PC-9 (cell line): ENCODE measurements at regions of chr9 and their contacts with region 1.

Region 1: GRCh38 chr9:71604197-71605063 is 163.9 kb downstream of the CEMIP2 start:
- DNase-seq: peak in 1 of 2 experiments; percentile 72
- H3K4me3 ChIP-seq: no peak overlapping the region
- H3K27ac ChIP-seq: no peak overlapping the region
- H3K4me1 ChIP-seq: no peaks in the 10 kb centered on the region
- H3K27me3 ChIP-seq: no peaks in the 10 kb centered on the region
- CTCF ChIP-seq: peak; percentile 87

Region 2: DNA sequence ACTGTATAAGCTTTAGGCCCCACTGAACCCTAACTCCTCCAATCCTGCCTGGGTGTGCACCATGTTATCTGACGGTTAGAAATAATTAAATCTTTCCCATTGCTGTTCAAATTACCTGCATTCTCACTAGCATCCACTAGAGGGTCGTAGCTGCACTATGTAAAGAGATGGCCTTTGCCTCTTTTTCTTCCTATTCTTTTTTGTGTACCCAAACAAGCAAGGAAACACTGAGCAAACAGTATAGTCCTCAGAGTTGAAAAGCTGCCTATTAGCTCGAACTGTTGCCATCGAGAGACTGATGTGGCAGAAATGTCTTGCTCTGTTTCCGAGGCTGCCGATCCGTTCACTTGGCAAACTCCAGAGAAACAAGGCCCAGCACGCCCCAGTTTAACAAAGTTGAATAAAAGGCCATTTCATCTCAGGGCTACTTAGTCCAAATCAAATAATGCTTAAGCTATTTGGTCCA is 319.2 kb before region 1 on chr9:
- CTCF ChIA-PET with region 1: no interaction called
- POLR2A ChIA-PET with region 1: no interaction called
- intact Hi-C with region 1: loop called (anchors 10 kb)
- DNase-seq: peak; percentile 49 to 55
- H3K4me3 ChIP-seq: no peak overlapping the region
- H3K27ac ChIP-seq: no peak overlapping the region
- H3K4me1 ChIP-seq: no peaks in the 10 kb centered on the region
- H3K27me3 ChIP-seq: no peaks in the 10 kb centered on the region
- CTCF ChIP-seq: peak; percentile 92

Region 3: GRCh38 chr9:71562140-71562539 is 42.3 kb before region 1 on chr9:
- CTCF ChIA-PET with region 1: no interaction called
- POLR2A ChIA-PET with region 1: no interaction called
- intact Hi-C with region 1: no loop called
- DNase-seq: no peak
- H3K4me3 ChIP-seq: no peak overlapping the region
- H3K27ac ChIP-seq: no peak overlapping the region
- H3K4me1 ChIP-seq: no peaks in the 10 kb centered on the region
- H3K27me3 ChIP-seq: no peaks in the 10 kb centered on the region
- CTCF ChIP-seq: no peak

Region 4: GRCh38 chr9:71683598-71684235 is 79.3 kb after region 1 on chr9:
- CTCF ChIA-PET with region 1: no interaction called
- POLR2A ChIA-PET with region 1: no interaction called
- intact Hi-C with region 1: loop called (anchors 1 kb)
- DNase-seq: no peak
- H3K4me3 ChIP-seq: no peak overlapping the region
- H3K27ac ChIP-seq: no peak overlapping the region
- H3K4me1 ChIP-seq: peaks cover 88% of the 10 kb centered on the region
- H3K27me3 ChIP-seq: no peaks in the 10 kb centered on the region
- CTCF ChIP-seq: no peak

Region 5: GRCh38 chr9:71716138-71716909 is 111.9 kb after region 1 on chr9:
- CTCF ChIA-PET with region 1: interaction called, 6 read pairs
- POLR2A ChIA-PET with region 1: no interaction called
- intact Hi-C with region 1: loop called (anchors 2 kb)
- DNase-seq: no peak
- H3K4me3 ChIP-seq: no peak overlapping the region
- H3K27ac ChIP-seq: no peak overlapping the region
- H3K4me1 ChIP-seq: no peaks in the 10 kb centered on the region; the same call in 1 of the 2 replicates
- H3K27me3 ChIP-seq: no peaks in the 10 kb centered on the region
- CTCF ChIP-seq: peak; percentile 77

Region 6: GRCh38 chr9:71819115-71819739 is 214.8 kb after region 1 on chr9:
- CTCF ChIA-PET with region 1: no interaction called
- POLR2A ChIA-PET with region 1: interaction called, 4 read pairs
- intact Hi-C with region 1: loop called (anchors 1 kb)
- DNase-seq: peak in 1 of 2 experiments; percentile 28
- H3K4me3 ChIP-seq: no peak overlapping the region
- H3K27ac ChIP-seq: no peak overlapping the region
- H3K4me1 ChIP-seq: no peaks in the 10 kb centered on the region
- H3K27me3 ChIP-seq: no peaks in the 10 kb centered on the region
- CTCF ChIP-seq: peak; percentile 90